A673 (cell line): ENCODE measurements at regions of chr7 and their contacts with region 1.

Region 1: GRCh38 chr7:102874166-102874829 is 38.5 kb upstream of the LRRC17 start:
- DNase-seq: no peak
- H3K4me3 ChIP-seq: no peak overlapping the region
- H3K27ac ChIP-seq: no peak overlapping the region
- H3K4me1 ChIP-seq: peaks cover 22% of the 10 kb centered on the region
- H3K27me3 ChIP-seq: peaks cover 58% of the 10 kb centered on the region
- CTCF ChIP-seq: no peak

Region 2: GRCh38 chr7:102834999-102835398 is 39.3 kb before region 1 on chr7:
- CTCF ChIA-PET with region 1: no interaction called
- POLR2A ChIA-PET with region 1: no interaction called
- intact Hi-C with region 1: loop called (anchors 5 kb)
- DNase-seq: peak; percentile 37
- H3K4me3 ChIP-seq: no peak overlapping the region
- H3K27ac ChIP-seq: no peak overlapping the region
- H3K4me1 ChIP-seq: peaks cover 21% of the 10 kb centered on the region
- H3K27me3 ChIP-seq: no peaks in the 10 kb centered on the region
- CTCF ChIP-seq: no peak

Region 3: DNA sequence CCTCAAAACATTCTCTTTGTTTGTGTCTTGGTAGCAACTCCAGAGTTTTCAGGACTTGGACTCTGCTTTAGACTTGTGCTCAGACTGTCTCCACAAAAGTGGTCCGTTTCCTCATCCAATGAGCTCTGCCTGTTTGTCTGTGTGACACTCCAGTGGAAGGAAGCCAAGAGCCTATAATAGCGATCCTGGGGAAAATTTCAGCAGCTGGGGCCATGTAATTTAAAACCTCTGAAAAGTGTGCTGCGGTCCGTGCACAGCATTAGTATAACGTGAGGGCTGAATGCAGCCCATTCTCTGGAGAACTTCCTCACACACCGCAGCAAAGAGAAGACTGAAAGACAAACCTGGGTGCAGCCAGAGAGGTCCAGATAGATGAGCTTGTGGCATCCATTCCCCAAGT is 38.4 kb after region 1 on chr7 and contains the start of gene LRRC17:
- CTCF ChIA-PET with region 1: no interaction called
- POLR2A ChIA-PET with region 1: no interaction called
- intact Hi-C with region 1: loop called (anchors 5 kb)
- DNase-seq: peak; percentile 95
- H3K4me3 ChIP-seq: peak within 1 kb of the TSS; percentile 46
- H3K27ac ChIP-seq: peak within 1 kb of the TSS; percentile 52
- H3K4me1 ChIP-seq: peaks cover 32% of the 10 kb centered on the region
- H3K27me3 ChIP-seq: no peaks in the 10 kb centered on the region
- CTCF ChIP-seq: no peak
- total RNA-seq, gene LRRC17: 9.2 and 10.0 TPM in 2 replicates

Region 4: GRCh38 chr7:102933763-102934162 is 59.5 kb after region 1 on chr7:
- CTCF ChIA-PET with region 1: no interaction called
- POLR2A ChIA-PET with region 1: no interaction called
- intact Hi-C with region 1: no loop called
- DNase-seq: no peak
- H3K4me3 ChIP-seq: no peak overlapping the region
- H3K27ac ChIP-seq: no peak overlapping the region
- H3K4me1 ChIP-seq: no peaks in the 10 kb centered on the region
- H3K27me3 ChIP-seq: no peaks in the 10 kb centered on the region
- CTCF ChIP-seq: no peak

Region 5: DNA sequence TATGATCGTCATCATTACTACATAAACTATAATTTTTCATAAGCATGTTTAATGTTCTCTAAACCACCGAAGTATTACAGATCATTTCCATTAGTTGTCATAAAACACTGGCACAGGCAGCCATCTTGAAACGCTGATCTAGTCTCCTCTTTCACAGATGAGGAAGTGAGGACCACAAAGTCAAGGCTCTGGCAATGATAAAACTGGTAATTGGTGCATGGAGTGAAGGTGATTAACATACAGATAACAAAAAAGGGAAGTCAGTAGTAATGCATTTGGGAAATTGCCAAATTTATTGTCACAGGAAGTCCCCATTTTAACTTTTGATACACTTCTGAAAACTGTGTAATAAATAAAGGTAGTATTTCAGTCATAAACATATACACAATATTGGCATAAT is 151.0 kb after region 1 on chr7:
- CTCF ChIA-PET with region 1: no interaction called
- POLR2A ChIA-PET with region 1: no interaction called
- intact Hi-C with region 1: no loop called
- DNase-seq: no peak
- H3K4me3 ChIP-seq: no peak overlapping the region
- H3K27ac ChIP-seq: no peak overlapping the region
- H3K4me1 ChIP-seq: no peaks in the 10 kb centered on the region
- H3K27me3 ChIP-seq: no peaks in the 10 kb centered on the region
- CTCF ChIP-seq: no peak